ENCODE measurements at regions of chr14 and their contacts with region 1.

Region 1: GRCh38 chr14:21428930-21429329 is 27.0 kb downstream of the CHD8 start:
- DNase-seq: peak in 3 of 10 donors; percentile 5 to 74 (median 69)

Region 2: GRCh38 chr14:21320913-21321312 is 108.0 kb before region 1 on chr14:
- intact Hi-C with region 1: loop called (anchors 5 kb)
- DNase-seq: no peak